ENCODE measurements at regions of chr16 and their contacts with region 1.

Region 1: DNA sequence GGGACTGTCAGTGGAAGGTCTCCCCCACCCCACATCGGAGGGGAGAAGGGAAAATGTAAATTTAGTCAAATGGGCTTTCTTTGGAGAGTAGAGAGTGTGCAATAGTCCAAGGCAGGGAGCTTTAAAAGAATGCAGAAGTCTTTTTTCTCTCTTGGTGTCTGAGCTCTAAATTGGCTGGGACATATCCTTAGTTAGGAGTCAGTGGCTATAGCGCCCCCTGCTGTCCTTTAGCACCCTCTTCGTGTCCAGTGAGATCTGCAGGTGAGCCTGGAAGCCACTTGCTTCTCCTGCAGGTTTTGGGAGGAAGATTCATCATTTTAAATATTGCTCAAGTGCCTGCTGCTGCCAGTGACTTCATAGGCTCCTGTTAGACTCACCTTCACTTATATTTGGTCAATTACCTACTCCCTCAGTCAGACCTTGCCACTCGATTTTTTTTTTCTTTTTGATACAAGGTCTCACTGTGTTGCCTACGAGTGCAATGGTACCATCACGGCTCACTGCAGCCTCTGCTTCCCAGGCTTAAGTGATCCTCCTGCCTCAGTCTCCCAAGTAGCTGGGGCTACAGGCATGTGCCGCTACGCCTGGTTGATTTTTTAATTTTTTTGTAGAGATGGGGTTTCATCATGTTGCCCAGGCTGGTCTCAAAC is 174.8 kb downstream of the PRKCB start:
- DNase-seq: peak; percentile 73 to 95 (median 78)
- ATAC-seq: peak; percentile 77
- H3K4me3 ChIP-seq: no peak overlapping the region
- H3K4me1 ChIP-seq: peaks cover 5% of the 10 kb centered on the region
- CTCF ChIP-seq: peak; percentile 70

Region 2: GRCh38 chr16:23595951-23596720 is 414.4 kb before region 1 on chr16 and contains the start of gene NDUFAB1:
- intact Hi-C with region 1: no loop called
- DNase-seq: peak; percentile 94 to 96 (median 95)
- ATAC-seq: peak; percentile 100
- H3K4me3 ChIP-seq: peak within 1 kb of the TSS; percentile 98
- H3K4me1 ChIP-seq: peaks cover 14% of the 10 kb centered on the region
- CTCF ChIP-seq: peak; percentile 100
- total RNA-seq, gene NDUFAB1: 101 to 126 (median 115) TPM

Region 3: GRCh38 chr16:23729503-23730424 is 280.8 kb before region 1 on chr16:
- intact Hi-C with region 1: loop called in 1 of 2 experiments (anchors 10 kb)
- DNase-seq: peak; percentile 74 to 85 (median 76)
- ATAC-seq: peak; percentile 98
- H3K4me3 ChIP-seq: no peak overlapping the region
- H3K4me1 ChIP-seq: peaks cover 9% of the 10 kb centered on the region
- CTCF ChIP-seq: no peak

Region 4: GRCh38 chr16:23795378-23795777 is 215.2 kb before region 1 on chr16:
- intact Hi-C with region 1: loop called (anchors 10 kb)
- DNase-seq: no peak
- ATAC-seq: no peak
- H3K4me3 ChIP-seq: no peak overlapping the region
- H3K4me1 ChIP-seq: peaks cover 6% of the 10 kb centered on the region
- CTCF ChIP-seq: no peak

Region 5: GRCh38 chr16:23803591-23804123 is 206.9 kb before region 1 on chr16:
- intact Hi-C with region 1: loop called (anchors 10 kb)
- DNase-seq: peak; percentile 76 to 88 (median 80)
- ATAC-seq: peak; percentile 90
- H3K4me3 ChIP-seq: no peak overlapping the region
- H3K4me1 ChIP-seq: peaks cover 5% of the 10 kb centered on the region
- CTCF ChIP-seq: peak; percentile 44